A673 (cell line): ENCODE measurements at regions of chr5 and their contacts with region 1.

Region 1: GRCh38 chr5:178130604-178131485 is at the start of gene RMND5B:
- DNase-seq: peak; percentile 84
- H3K4me3 ChIP-seq: peak within 1 kb of the TSS; percentile 75
- H3K27ac ChIP-seq: peak within 1 kb of the TSS; percentile 90
- H3K4me1 ChIP-seq: no peaks in the 10 kb centered on the region
- H3K27me3 ChIP-seq: no peaks in the 10 kb centered on the region
- CTCF ChIP-seq: no peak
- total RNA-seq, gene RMND5B: 37.0 and 38.0 TPM in 2 replicates

Region 2: DNA sequence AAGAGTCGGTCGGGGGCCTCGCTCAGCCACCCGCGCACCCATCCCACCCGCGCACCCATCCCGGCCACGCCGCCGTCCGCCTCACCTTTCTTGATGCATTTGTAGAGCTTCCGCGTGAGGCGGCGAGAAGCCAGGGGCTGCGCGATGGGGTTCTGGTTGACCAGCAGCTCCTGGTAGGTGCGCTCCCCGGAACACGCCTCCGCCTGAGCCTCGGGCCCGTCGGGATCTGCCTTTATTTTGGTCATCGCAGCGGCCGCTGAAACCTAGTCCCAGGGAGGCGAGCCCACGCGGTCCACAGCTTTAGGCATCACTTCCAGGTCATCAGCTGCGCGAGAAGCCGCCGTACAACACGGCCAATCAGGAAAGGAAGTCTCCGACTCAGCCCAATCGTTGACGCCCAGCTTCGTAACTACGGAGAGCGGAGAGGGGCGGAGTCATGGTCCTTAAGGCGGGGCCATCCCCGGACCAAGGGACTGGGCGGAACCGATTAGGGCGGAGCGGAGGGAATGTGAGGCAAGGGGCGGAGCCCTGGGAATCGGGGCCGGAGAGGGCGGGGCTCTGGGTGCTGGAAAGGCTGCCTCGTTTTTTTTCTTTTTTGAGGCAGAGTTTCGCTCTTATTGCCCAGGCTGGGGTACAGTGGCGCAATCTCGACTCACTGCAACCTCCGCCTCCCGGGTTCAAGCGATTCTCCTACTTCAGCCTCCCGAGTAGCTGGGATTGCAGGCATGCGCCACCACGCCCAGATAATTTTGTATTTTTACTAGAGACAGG is 22.9 kb after region 1 on chr5 and contains the start of gene NHP2:
- CTCF ChIA-PET with region 1: no interaction called
- POLR2A ChIA-PET with region 1: interaction called, 17 read pairs
- intact Hi-C with region 1: no loop called
- DNase-seq: peak; percentile 96
- H3K4me3 ChIP-seq: peak within 1 kb of the TSS; percentile 82
- H3K27ac ChIP-seq: peak within 1 kb of the TSS; percentile 77
- H3K4me1 ChIP-seq: peaks cover 8% of the 10 kb centered on the region
- H3K27me3 ChIP-seq: no peaks in the 10 kb centered on the region
- CTCF ChIP-seq: no peak
- total RNA-seq, gene NHP2: 223 and 232 TPM in 2 replicates